RWPE1 (cell line): ENCODE measurements at regions of chr5 and their contacts with region 1.

Region 1: DNA sequence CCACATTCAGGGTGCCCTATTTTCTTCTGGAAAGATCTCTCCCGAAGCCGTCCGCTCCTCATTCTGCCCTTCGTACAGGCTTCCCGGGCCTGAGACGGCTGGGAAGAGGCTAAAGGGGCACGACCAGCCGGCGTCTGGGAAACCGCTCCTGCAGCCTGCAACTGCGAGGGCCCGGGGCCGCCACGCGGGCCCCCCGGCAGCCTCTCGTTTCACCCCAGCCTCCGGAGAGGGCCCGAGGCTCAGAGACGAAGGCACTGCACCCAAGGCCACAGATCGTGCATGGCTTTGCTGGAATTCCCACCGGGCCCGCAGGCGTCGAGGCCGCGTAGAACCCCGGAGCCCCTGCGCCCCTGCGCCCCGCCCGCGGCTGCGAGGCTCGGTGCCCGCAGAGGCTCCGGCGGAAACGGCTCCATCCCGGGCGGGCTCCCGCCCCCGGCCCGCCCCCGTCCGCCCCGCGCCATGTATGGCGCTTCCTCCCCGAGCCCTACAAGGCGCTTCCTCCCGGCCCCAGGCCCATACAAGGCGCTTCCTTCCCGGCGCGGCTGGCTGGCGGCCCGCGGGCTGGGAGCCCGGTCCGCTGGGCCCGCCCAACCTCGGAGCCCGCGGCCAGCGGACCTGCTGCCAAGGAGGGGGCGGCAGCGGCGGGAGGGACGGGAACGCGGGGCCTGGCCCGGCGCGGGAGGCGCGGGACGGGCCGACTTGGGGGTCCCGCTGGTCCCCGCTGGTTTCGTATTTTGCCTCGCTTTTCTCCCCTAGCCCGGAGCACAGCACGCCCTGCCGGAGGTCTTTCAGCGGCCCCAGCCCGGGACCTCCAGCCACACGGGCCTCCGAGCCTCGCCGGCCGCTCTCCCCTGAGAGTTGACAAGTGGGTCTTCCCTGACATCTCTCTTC is 26.6 kb downstream of the EGR1 start:
- DNase-seq: peak; percentile 94
- H3K27ac ChIP-seq: peak overlapping the region; percentile 82
- CTCF ChIP-seq: no peak

Region 2: GRCh38 chr5:138503487-138504270 is 11.8 kb after region 1 on chr5:
- CTCF ChIA-PET with region 1: interaction called, 16 read pairs
- POLR2A ChIA-PET with region 1: interaction called, 4 read pairs
- DNase-seq: peak; percentile 86
- H3K27ac ChIP-seq: peak overlapping the region; percentile 91
- CTCF ChIP-seq: peak; percentile 90